Activated naive CD4-positive, alpha-beta T cell treated with anti-CD3 and anti-CD28 coated beads for 36 hours (primary cell): ENCODE measurements at regions of chr17 and their contacts with region 1.

Region 1: GRCh38 chr17:74457146-74457819 is 9.2 kb upstream of the CD300A start:
- DNase-seq: peak; percentile 81
- H3K4me3 Mint-ChIP-seq: no peak overlapping the region
- H3K27ac Mint-ChIP-seq: no peak overlapping the region
- H3K4me1 Mint-ChIP-seq: peaks cover 4% of the 10 kb centered on the region
- H3K27me3 Mint-ChIP-seq: peaks cover 8% of the 10 kb centered on the region

Region 2: DNA sequence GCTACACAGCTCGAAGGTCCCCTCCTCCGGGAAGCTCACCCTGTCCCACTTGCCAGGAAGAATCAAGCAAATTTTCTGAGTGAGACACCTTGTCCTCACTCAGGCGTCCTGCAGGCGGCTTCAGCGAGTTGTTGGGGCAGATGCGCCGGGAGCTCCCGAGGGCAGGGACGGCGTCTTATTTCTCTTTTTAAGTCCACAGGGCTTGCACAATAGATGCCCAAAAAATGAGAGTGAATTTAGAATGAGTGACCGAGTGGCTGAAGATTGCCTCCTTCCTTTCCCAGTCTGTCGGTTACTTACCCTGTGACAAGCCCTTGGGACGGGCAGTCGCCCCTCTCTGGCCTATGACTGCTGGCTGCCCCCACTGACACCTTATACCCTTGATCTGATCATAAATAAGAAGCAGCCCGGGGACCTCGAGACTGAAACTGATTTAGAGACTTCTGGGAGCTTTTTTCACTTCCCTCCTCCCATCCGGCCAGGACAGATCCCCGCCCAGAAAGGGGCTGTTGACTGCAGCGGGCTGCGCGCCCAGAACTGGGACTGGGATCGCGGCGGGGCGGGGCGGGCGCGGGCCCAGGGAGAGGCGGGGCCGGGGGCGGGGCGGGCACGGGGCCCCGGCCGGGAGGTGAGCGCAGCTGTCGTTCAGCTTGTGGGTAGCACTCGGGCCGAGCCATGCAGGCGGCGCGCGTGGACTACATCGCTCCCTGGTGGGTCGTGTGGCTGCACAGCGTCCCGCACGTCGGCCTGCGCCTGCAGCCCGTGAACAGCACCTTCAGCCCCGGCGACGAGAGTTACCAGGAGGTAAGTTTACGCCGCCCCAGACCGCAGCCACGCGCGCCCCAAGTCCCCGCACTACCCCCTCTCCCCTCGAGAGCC is 244.1 kb before region 1 on chr17 and contains the start of gene TTYH2:
- CTCF ChIA-PET with region 1: no interaction called
- intact Hi-C with region 1: loop called (anchors 5 kb)
- DNase-seq: peak; percentile 78
- H3K4me3 Mint-ChIP-seq: peak within 1 kb of the TSS; percentile 74
- H3K27ac Mint-ChIP-seq: peak within 1 kb of the TSS; percentile 24
- H3K4me1 Mint-ChIP-seq: peaks cover 62% of the 10 kb centered on the region
- H3K27me3 Mint-ChIP-seq: no peaks in the 10 kb centered on the region
- total RNA-seq, gene TTYH2: 2.5 to 2.8 TPM

Region 3: GRCh38 chr17:74379495-74380085 is 77.7 kb before region 1 on chr17:
- CTCF ChIA-PET with region 1: interaction called, 7 read pairs
- intact Hi-C with region 1: loop called (anchors 1 kb)
- DNase-seq: peak; percentile 96
- H3K4me3 Mint-ChIP-seq: no peak overlapping the region
- H3K27ac Mint-ChIP-seq: no peak overlapping the region
- H3K4me1 Mint-ChIP-seq: no peaks in the 10 kb centered on the region
- H3K27me3 Mint-ChIP-seq: no peaks in the 10 kb centered on the region

Region 4: DNA sequence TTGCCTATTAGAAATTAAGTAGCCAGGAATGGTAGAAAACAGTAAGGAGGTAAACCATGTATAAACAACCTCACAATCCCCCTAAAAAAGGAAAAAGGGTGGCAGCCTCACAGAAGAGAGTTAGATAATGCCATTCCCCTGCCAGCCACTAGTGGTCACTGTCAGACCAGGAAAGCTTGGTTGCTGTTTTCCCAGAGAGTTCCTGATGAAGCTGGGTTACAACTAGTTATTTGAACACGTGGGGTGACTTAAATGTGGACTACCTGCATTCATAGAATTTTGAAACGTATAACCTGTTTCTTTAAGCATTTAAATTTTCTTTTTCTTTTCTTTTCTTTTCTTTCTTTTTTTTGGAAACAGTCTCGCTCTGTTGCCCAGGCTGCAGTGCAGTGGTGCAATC is 19.6 kb before region 1 on chr17:
- CTCF ChIA-PET with region 1: interaction called, 16 read pairs
- intact Hi-C with region 1: no loop called
- DNase-seq: peak; percentile 26
- H3K4me3 Mint-ChIP-seq: no peak overlapping the region
- H3K27ac Mint-ChIP-seq: no peak overlapping the region
- H3K4me1 Mint-ChIP-seq: no peaks in the 10 kb centered on the region
- H3K27me3 Mint-ChIP-seq: peaks cover 22% of the 10 kb centered on the region

Region 5: GRCh38 chr17:74467221-74467951 is 10.1 kb after region 1 on chr17:
- CTCF ChIA-PET with region 1: interaction called, 11 read pairs
- intact Hi-C with region 1: no loop called
- DNase-seq: no peak
- H3K4me3 Mint-ChIP-seq: no peak overlapping the region
- H3K27ac Mint-ChIP-seq: peak overlapping the region; percentile 7
- H3K4me1 Mint-ChIP-seq: peaks cover 25% of the 10 kb centered on the region
- H3K27me3 Mint-ChIP-seq: no peaks in the 10 kb centered on the region

Region 6: GRCh38 chr17:74493381-74493833 is 36.1 kb after region 1 on chr17:
- CTCF ChIA-PET with region 1: interaction called, 8 read pairs
- intact Hi-C with region 1: loop called (anchors 1 kb)
- DNase-seq: peak; percentile 79
- H3K4me3 Mint-ChIP-seq: no peak overlapping the region
- H3K27ac Mint-ChIP-seq: no peak overlapping the region
- H3K4me1 Mint-ChIP-seq: no peaks in the 10 kb centered on the region
- H3K27me3 Mint-ChIP-seq: peaks cover 2% of the 10 kb centered on the region

Region 7: GRCh38 chr17:74528491-74529199 is 71.4 kb after region 1 on chr17:
- CTCF ChIA-PET with region 1: interaction called, 3 read pairs
- intact Hi-C with region 1: loop called (anchors 5 kb)
- DNase-seq: no peak
- H3K4me3 Mint-ChIP-seq: no peak overlapping the region
- H3K27ac Mint-ChIP-seq: no peak overlapping the region
- H3K4me1 Mint-ChIP-seq: peaks cover 2% of the 10 kb centered on the region
- H3K27me3 Mint-ChIP-seq: peaks cover 26% of the 10 kb centered on the region

Region 8: DNA sequence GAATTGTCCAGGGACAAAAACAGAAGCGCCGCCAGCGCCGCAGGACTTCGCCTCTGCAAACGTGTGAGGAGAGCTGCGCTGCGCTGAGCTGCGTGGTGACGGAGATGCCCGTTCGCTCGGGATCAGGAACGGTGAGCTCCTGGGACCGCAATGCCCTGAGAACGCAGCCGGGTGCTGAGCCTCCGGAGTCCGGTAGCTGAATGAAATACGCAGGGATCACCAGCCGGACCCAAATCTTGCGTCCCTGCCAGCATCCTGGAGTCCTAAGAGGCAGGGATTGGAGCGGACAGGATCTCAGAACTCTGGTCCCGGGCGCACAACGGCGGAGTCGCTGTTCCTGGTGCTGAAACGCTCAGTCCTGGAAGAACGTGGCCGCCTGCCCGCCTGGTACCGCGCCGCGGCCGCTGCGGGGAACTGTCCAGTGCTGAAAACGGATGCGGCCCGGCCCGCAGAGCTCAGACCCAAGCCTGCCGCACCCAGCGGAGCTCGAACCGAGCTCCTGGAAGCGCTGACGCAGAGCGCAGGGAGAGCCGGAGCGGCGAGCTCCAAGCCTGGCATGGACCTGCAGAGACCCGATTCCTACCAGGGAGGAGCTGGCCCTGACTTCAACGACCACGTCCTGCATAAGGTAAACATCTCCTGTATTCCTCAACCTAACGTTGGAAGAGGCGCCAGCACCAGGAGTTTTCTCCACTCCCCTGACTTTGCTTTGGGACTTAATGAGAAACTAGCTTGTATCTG is 213.9 kb after region 1 on chr17:
- CTCF ChIA-PET with region 1: no interaction called
- intact Hi-C with region 1: no loop called
- DNase-seq: peak; percentile 90
- H3K4me3 Mint-ChIP-seq: no peak overlapping the region
- H3K27ac Mint-ChIP-seq: no peak overlapping the region
- H3K4me1 Mint-ChIP-seq: no peaks in the 10 kb centered on the region
- H3K27me3 Mint-ChIP-seq: peaks cover 35% of the 10 kb centered on the region